CD8-positive, alpha-beta T cell (primary cell): ENCODE measurements at regions of chr6 and their contacts with region 1.

Region 1: GRCh38 chr6:80094017-80094416 is 12.5 kb upstream of the BCKDHB start:
- DNase-seq: peak in 3 of 9 experiments; percentile 12 to 53 (median 39)
- ATAC-seq: peak; percentile 68
- H3K4me3 ChIP-seq: no peak overlapping the region
- H3K4me3 Mint-ChIP-seq: no peak overlapping the region
- H3K27ac ChIP-seq: no peak overlapping the region
- H3K27ac Mint-ChIP-seq: no peak overlapping the region
- H3K4me1 ChIP-seq: no peaks in the 10 kb centered on the region
- H3K4me1 Mint-ChIP-seq: peaks cover 6% of the 10 kb centered on the region
- H3K27me3 ChIP-seq: no peaks in the 10 kb centered on the region
- H3K27me3 Mint-ChIP-seq: peaks cover 5% of the 10 kb centered on the region
- CTCF ChIP-seq: peak; percentile 83

Region 2: GRCh38 chr6:79777713-79778579 is 316.1 kb before region 1 on chr6:
- CTCF ChIA-PET with region 1: interaction called, 3 read pairs
- POLR2A ChIA-PET with region 1: no interaction called
- intact Hi-C with region 1: loop called (anchors 1 to 5 kb)
- DNase-seq: peak; percentile 65 to 90 (median 82)
- ATAC-seq: peak; percentile 97
- H3K4me3 ChIP-seq: peak overlapping the region; percentile 36 to 38
- H3K4me3 Mint-ChIP-seq: peak overlapping the region; percentile 78
- H3K27ac ChIP-seq: no peak overlapping the region
- H3K27ac Mint-ChIP-seq: no peak overlapping the region
- H3K4me1 ChIP-seq: peaks cover 4% of the 10 kb centered on the region
- H3K4me1 Mint-ChIP-seq: peaks cover 6% of the 10 kb centered on the region
- H3K27me3 ChIP-seq: no peaks in the 10 kb centered on the region
- H3K27me3 Mint-ChIP-seq: peaks cover 2% of the 10 kb centered on the region
- CTCF ChIP-seq: peak; percentile 94

Region 3: GRCh38 chr6:79949233-79949632 is 144.8 kb before region 1 on chr6:
- CTCF ChIA-PET with region 1: interaction called, 45 read pairs
- POLR2A ChIA-PET with region 1: interaction called, 4 read pairs
- intact Hi-C with region 1: loop called (anchors 1 kb)
- DNase-seq: peak in 7 of 9 experiments; percentile 25 to 88 (median 57)
- ATAC-seq: peak; percentile 24
- H3K4me3 ChIP-seq: no peak overlapping the region
- H3K4me3 Mint-ChIP-seq: peak overlapping the region; percentile 9
- H3K27ac ChIP-seq: no peak overlapping the region
- H3K27ac Mint-ChIP-seq: peak overlapping the region; percentile 5
- H3K4me1 ChIP-seq: peaks cover 16% of the 10 kb centered on the region
- H3K4me1 Mint-ChIP-seq: peaks cover 27% of the 10 kb centered on the region
- H3K27me3 ChIP-seq: no peaks in the 10 kb centered on the region
- H3K27me3 Mint-ChIP-seq: peaks cover 2% of the 10 kb centered on the region
- CTCF ChIP-seq: peak; percentile 80

Region 4: DNA sequence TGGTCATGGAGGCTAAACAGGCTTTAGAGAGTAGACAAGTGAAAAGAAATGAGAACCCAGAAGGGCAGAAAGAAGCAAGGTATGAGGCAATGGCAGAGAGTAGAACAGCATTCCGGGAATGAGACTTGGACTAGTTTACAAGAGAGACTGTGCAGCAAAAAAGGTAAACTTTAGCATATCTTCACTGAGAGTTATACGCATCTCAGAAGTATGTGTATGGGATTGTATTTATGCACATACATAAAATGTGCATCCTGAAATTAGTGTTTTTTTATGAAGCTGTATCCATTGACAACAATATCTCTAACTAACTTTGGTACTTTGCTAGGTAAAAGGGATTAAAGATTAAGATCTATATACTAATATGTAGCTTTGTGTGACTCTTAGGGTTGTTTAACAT is 766.1 kb after region 1 on chr6:
- CTCF ChIA-PET with region 1: no interaction called
- POLR2A ChIA-PET with region 1: no interaction called
- intact Hi-C with region 1: no loop called
- DNase-seq: no peak
- ATAC-seq: no peak
- H3K4me3 ChIP-seq: no peak overlapping the region
- H3K4me3 Mint-ChIP-seq: no peak overlapping the region
- H3K27ac ChIP-seq: no peak overlapping the region
- H3K27ac Mint-ChIP-seq: no peak overlapping the region
- H3K4me1 ChIP-seq: no peaks in the 10 kb centered on the region
- H3K4me1 Mint-ChIP-seq: no peaks in the 10 kb centered on the region
- H3K27me3 ChIP-seq: no peaks in the 10 kb centered on the region
- H3K27me3 Mint-ChIP-seq: no peaks in the 10 kb centered on the region
- CTCF ChIP-seq: no peak